ENCODE measurements at regions of chr1 and their contacts with region 1.

Region 1: DNA sequence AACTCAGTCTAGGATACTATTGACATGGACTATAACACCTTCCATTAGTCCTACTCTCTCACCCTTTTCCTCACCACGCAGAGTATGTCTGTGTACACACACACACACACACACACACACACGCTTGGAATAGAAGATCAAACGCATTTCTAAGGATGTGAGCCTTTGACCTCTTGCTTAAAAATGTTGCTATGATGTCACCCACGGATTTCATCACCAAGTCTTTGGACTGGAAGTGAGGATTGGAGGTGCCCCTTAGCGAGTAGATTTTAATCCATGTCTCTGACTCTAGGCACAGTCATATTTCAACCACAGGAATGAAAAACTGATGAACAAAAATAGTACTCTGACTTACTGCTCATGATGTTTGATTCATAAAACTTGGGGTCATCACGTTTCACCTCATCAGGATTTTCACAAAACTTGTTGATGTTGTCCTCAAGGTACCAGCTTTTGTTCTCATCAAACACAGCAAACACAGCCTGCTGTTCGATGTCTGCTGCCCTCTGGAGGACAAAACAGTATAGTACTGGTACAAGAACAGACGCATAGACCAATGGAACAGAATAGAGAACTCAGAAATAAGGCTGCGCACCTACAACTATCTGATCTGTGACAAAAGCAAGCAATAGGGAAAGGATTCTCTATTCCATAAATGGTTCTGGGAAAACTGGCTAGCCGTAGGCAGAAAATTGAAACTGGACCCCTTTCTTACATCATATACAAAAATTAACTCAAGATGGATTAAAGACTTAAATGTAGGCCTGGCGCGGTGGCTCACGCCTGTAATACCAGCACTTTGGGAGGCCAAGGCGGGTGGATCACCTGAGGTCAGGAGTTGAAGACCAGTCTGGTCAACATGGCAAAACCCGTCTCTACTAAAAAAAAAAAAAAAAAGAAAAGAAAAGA is 39.9 kb downstream of the F5 start:
- DNase-seq: peak; percentile 50
- ATAC-seq: peak; percentile 92
- H3K4me3 ChIP-seq: no peak overlapping the region
- H3K27ac ChIP-seq: no peak overlapping the region
- H3K4me1 ChIP-seq: no peaks in the 10 kb centered on the region
- H3K27me3 ChIP-seq: peaks cover 3% of the 10 kb centered on the region; the same call in 1 of the 2 replicates
- CTCF ChIP-seq: peak; percentile 83

Region 2: GRCh38 chr1:168603501-168604110 is 942.7 kb before region 1 on chr1:
- CTCF ChIA-PET with region 1: no interaction called
- POLR2A ChIA-PET with region 1: no interaction called
- in situ Hi-C with region 1: no loop called
- intact Hi-C with region 1: loop called (anchors 1 kb)
- DNase-seq: peak; percentile 48
- ATAC-seq: peak; percentile 98
- H3K4me3 ChIP-seq: no peak overlapping the region
- H3K27ac ChIP-seq: no peak overlapping the region
- H3K4me1 ChIP-seq: no peaks in the 10 kb centered on the region
- H3K27me3 ChIP-seq: no peaks in the 10 kb centered on the region
- CTCF ChIP-seq: peak; percentile 86

Region 3: DNA sequence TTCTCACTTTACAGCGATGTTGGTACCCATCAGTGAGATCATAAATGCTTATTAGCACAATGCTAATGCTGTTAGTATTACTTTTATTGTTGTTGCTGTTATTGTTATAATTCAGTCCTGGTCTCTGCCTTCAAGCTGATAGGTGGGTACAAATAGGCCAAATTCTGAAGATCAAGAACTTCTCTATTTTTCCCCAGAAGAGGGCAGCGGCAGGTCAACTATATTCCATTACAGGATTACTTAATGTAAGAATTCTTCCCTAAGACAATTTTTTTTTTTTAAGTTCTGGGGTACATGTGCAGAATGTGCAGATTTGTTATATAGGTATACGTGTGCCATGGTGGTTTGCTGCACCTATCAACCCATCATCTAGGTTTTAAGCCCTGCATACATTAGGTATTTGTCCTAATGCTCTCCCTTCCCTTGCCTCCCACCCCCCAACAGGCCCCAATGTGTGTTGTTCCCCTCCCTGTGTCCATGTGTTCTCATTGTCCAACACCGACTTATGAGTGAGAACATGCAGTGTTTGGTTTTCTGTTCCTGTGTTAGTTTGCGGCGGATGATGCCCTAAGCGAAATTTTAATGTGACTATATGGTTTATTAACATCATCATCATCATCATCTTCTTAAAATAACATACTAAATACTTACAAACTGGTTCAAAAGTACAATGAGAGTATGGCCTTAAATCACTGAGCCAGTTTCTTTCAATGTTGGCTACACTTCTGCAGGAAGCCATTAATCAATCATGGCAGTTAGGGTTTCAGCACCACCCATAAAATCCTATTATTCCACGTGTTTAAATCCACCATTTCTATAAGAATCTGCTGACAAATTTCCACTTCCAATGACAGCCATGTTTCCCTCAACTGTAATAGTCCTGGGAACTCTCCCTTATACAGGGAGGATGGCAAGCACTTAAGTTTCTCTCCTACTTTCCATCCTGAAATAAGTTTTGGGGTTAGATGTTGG is 79.8 kb before region 1 on chr1:
- CTCF ChIA-PET with region 1: no interaction called
- POLR2A ChIA-PET with region 1: no interaction called
- in situ Hi-C with region 1: no loop called
- intact Hi-C with region 1: loop called (anchors 1 kb)
- DNase-seq: no peak
- ATAC-seq: peak; percentile 63; the same call in 1 of the 2 replicates
- H3K4me3 ChIP-seq: no peak overlapping the region
- H3K27ac ChIP-seq: no peak overlapping the region
- H3K4me1 ChIP-seq: no peaks in the 10 kb centered on the region
- H3K27me3 ChIP-seq: no peaks in the 10 kb centered on the region
- CTCF ChIP-seq: peak; percentile 60

Region 4: GRCh38 chr1:169630006-169630405 is 83.7 kb after region 1 on chr1 and contains the start of gene SELP:
- CTCF ChIA-PET with region 1: no interaction called
- POLR2A ChIA-PET with region 1: no interaction called
- in situ Hi-C with region 1: no loop called
- intact Hi-C with region 1: no loop called
- DNase-seq: no peak
- ATAC-seq: no peak
- H3K4me3 ChIP-seq: no peak within 1 kb of the TSS
- H3K27ac ChIP-seq: no peak within 1 kb of the TSS
- H3K4me1 ChIP-seq: no peaks in the 10 kb centered on the region
- H3K27me3 ChIP-seq: no peaks in the 10 kb centered on the region
- CTCF ChIP-seq: no peak
- total RNA-seq, gene SELP: not detected

Region 5: GRCh38 chr1:169809370-169810095 is 263.2 kb after region 1 on chr1:
- CTCF ChIA-PET with region 1: no interaction called
- POLR2A ChIA-PET with region 1: no interaction called
- in situ Hi-C with region 1: no loop called
- intact Hi-C with region 1: loop called (anchors 1 kb)
- DNase-seq: no peak
- ATAC-seq: peak; percentile 71; the same call in 1 of the 2 replicates
- H3K4me3 ChIP-seq: no peak overlapping the region
- H3K27ac ChIP-seq: no peak overlapping the region
- H3K4me1 ChIP-seq: no peaks in the 10 kb centered on the region
- H3K27me3 ChIP-seq: no peaks in the 10 kb centered on the region
- CTCF ChIP-seq: peak; percentile 73

Measured in Panc1 (cell line).